Activated naive CD4-positive, alpha-beta T cell treated with anti-CD3 and anti-CD28 coated beads for 36 hours (primary cell): ENCODE measurements at regions of chr6 and their contacts with region 1.

Region 1: GRCh38 chr6:143940011-143940597 is 68.0 kb downstream of the PLAGL1 start:
- DNase-seq: peak; percentile 76
- H3K4me3 Mint-ChIP-seq: no peak overlapping the region
- H3K27ac Mint-ChIP-seq: no peak overlapping the region
- H3K4me1 Mint-ChIP-seq: no peaks in the 10 kb centered on the region
- H3K27me3 Mint-ChIP-seq: no peaks in the 10 kb centered on the region

Region 2: DNA sequence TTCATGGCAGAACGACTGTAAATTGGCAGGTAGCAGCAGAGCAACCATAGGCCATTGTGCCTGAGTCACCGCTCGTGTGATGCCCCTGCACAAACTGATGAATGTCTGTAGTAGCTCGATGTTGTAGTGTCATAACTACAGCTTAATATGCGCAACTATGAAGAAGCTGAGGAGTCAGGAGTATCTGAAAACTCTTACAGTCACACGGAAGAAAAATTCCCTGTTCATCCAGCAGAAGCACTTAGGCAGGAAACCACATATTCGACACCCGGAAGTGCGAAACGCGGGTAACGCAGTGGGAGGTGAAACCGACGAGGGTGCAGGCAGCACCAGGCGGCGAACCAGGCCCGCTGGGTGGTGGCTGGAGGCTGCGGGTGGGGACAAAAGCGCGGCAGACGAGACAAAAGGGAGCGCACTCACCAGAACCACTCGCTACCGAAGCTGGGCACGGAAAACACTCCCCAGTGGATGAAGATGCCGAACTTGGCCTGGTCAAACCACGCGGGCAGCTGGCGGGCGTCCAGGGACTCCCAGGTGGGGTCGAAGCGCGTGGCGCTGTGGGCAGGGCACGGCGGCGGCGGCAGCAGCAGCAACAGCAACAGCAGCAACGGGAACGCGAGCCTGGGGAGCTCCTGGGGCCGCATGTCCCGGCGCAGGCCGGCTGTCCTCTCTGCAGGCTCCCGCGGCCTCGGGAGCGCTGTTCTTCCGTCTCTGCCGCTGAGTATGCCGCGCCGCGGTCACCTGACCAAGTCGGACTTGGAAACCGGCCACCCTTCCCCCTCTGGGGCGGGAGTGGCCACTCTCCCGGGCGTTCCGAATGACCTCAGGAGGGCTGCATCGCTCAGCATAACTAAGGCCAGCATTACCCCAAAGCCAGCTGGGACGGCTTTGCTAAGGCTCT is 428.9 kb before region 1 on chr6 and contains the start of gene FUCA2:
- CTCF ChIA-PET with region 1: interaction called, 5 read pairs
- intact Hi-C with region 1: loop called (anchors 1 kb)
- DNase-seq: peak; percentile 82
- H3K4me3 Mint-ChIP-seq: peak within 1 kb of the TSS; percentile 85
- H3K27ac Mint-ChIP-seq: peak within 1 kb of the TSS; percentile 85
- H3K4me1 Mint-ChIP-seq: peaks cover 15% of the 10 kb centered on the region
- H3K27me3 Mint-ChIP-seq: no peaks in the 10 kb centered on the region
- total RNA-seq, gene FUCA2: 7.7 to 8.2 TPM

Region 3: GRCh38 chr6:143928853-143929252 is 11.3 kb before region 1 on chr6:
- CTCF ChIA-PET with region 1: interaction called, 20 read pairs
- intact Hi-C with region 1: no loop called
- DNase-seq: no peak
- H3K4me3 Mint-ChIP-seq: no peak overlapping the region
- H3K27ac Mint-ChIP-seq: no peak overlapping the region
- H3K4me1 Mint-ChIP-seq: no peaks in the 10 kb centered on the region
- H3K27me3 Mint-ChIP-seq: no peaks in the 10 kb centered on the region

Region 4: GRCh38 chr6:144008120-144008811 is 68.2 kb after region 1 on chr6 and contains the start of gene PLAGL1:
- CTCF ChIA-PET with region 1: interaction called, 124 read pairs
- intact Hi-C with region 1: loop called (anchors 1 kb)
- DNase-seq: peak; percentile 17
- H3K4me3 Mint-ChIP-seq: peak within 1 kb of the TSS; percentile 67
- H3K27ac Mint-ChIP-seq: no peak within 1 kb of the TSS
- H3K4me1 Mint-ChIP-seq: peaks cover 8% of the 10 kb centered on the region
- H3K27me3 Mint-ChIP-seq: peaks cover 15% of the 10 kb centered on the region
- total RNA-seq, gene PLAGL1: 10.0 to 11.7 TPM

Region 5: DNA sequence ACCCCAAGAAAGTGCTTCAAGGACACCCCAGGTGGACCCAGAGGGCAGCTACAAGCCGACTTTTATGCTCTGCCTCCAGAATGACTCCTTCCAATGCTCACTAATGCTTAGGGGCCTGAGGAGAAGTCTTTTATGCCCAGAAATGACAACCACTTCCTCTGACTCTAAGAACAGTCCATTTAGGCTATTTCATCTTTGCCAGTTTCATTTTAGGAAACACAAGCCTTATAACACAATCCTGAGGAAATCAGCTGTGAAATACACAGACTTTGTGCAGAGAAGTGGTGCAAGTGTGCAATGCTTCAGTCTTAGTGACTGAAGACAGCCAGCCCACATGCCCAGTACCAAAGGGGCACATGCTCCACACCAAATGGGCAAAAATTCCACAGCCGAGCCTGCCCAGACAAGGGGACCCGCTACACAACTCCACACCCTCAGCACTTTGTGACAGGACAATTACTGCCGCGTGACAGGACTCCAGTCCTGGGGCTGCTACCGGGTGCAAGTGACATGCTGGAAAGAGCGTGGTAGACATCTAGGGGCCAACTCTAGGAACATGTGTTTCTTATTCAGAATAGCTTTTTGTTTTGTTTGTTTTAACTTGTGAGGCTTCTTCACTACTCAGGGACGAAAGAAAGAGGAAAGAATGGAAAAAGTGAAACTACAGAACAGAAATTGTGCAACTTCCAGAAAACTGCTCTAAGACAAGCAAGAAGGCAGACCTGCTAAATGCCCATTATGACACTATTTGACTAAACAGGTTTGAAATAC is 96.1 kb after region 1 on chr6:
- CTCF ChIA-PET with region 1: interaction called, 5 read pairs
- intact Hi-C with region 1: loop called (anchors 1 kb)
- DNase-seq: peak; percentile 50
- H3K4me3 Mint-ChIP-seq: peak overlapping the region; percentile 30
- H3K27ac Mint-ChIP-seq: no peak overlapping the region
- H3K4me1 Mint-ChIP-seq: peaks cover 14% of the 10 kb centered on the region
- H3K27me3 Mint-ChIP-seq: no peaks in the 10 kb centered on the region

Region 6: DNA sequence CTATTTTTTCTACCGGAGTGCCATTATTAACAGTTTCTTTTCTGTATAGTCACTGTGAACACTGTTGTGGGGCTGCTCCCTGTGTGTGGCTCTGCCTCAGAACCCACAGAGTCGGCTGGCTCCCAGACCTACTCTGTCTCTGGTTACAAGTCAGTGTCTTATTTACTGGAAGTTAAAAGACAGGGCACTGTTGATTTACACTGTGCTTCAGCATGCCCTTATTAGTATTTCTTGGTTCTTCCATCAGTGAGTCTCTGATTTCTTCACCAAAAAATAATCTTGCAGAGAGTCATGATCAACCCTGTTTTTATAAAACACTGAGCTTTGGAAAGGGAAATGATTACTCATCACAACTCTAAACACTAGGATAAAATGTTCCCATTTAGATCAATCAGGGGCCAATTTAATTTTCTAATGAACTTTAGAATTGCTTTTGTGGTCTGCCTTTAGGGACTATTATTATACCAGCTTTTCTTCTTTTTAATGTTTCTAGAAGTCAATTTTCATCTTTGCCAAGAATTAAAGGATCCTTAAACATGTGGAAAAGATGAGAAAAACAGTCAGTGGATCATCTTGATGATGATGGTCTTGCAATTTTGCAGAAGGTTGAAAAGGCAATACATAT is 437.6 kb after region 1 on chr6:
- CTCF ChIA-PET with region 1: no interaction called
- intact Hi-C with region 1: no loop called
- DNase-seq: peak; percentile 43
- H3K4me3 Mint-ChIP-seq: no peak overlapping the region
- H3K27ac Mint-ChIP-seq: no peak overlapping the region
- H3K4me1 Mint-ChIP-seq: peaks cover 45% of the 10 kb centered on the region
- H3K27me3 Mint-ChIP-seq: no peaks in the 10 kb centered on the region